ENCODE measurements at regions of chr18 and their contacts with region 1.

Region 1: DNA sequence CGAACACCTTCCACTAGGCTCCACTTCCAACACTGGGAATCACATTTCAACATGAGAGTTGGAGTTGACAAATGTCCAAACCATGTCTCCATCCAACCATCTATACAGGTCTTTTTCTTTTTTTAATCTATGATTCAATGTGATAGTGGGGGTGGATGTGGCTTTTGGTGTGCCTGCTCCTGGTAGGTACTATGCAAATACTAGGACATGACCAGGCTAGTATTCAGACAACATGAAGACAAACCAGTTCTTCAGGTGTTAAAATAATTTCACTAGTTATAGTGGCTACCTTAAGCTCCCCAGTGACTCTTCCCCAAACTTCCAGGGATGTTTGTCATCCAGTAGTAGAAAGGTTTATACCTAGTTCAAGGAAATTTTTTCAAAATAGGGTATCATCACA is 387.5 kb downstream of the CDH2 start:
- DNase-seq: no peak
- H3K4me3 ChIP-seq: no peak overlapping the region
- H3K27ac ChIP-seq: no peak overlapping the region
- H3K4me1 ChIP-seq: no peaks in the 10 kb centered on the region; a peak in 2 of 7 replicates
- H3K27me3 ChIP-seq: no peaks in the 10 kb centered on the region
- CTCF ChIP-seq: no peak
- EP300 ChIP-seq: no peak
- POLR2A ChIP-seq: no peak
- RAD21 ChIP-seq: no peak

Region 2: DNA sequence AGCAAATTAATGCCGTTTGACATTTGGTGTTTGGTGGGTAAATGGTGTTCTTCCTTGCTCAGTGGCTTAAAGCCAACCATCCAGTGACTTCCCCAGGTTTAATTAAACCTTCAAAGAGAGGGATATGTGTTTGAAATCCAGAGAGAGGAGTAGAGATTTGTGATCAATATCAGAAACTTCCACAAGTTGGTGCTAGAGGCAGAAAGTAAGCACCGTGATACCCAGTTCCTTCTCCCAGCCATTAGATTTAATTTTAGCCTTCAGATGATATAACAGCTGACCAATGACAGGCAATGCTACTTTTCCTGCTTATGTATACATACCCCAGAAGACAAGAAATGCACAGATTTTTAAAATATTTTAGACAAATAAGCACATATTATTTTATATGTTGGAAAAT is 11.0 kb before region 1 on chr18:
- CTCF ChIA-PET with region 1: interaction called, 19 read pairs
- POLR2A ChIA-PET with region 1: no interaction called
- DNase-seq: no peak
- H3K4me3 ChIP-seq: no peak overlapping the region
- H3K27ac ChIP-seq: no peak overlapping the region
- H3K4me1 ChIP-seq: peaks cover 0 to 8% (median 2%) of the 10 kb centered on the region in 4 experiments; a peak in 2 of 7 replicates
- H3K27me3 ChIP-seq: peaks cover 0 to 2% (median 0%) of the 10 kb centered on the region in 4 experiments; a peak in 2 of 7 replicates
- CTCF ChIP-seq: peak in 2 of 3 experiments; percentile 10 to 55; a peak in 2 of 4 replicates
- EP300 ChIP-seq: no peak
- POLR2A ChIP-seq: no peak
- RAD21 ChIP-seq: peak; percentile 70 to 72

Measured in H1 (cell line).